Endothelial cell of umbilical vein (primary cell): ENCODE measurements at regions of chr14 and their contacts with region 1.

Region 1: GRCh38 chr14:34629657-34630529 is at the start of gene SNX6:
- DNase-seq: peak; percentile 77
- H3K4me3 ChIP-seq: peak within 1 kb of the TSS; percentile 80 to 100 (median 84)
- H3K27ac ChIP-seq: peak within 1 kb of the TSS; percentile 79
- H3K4me1 ChIP-seq: peaks cover 12% of the 10 kb centered on the region
- H3K27me3 ChIP-seq: no peaks in the 10 kb centered on the region
- CTCF ChIP-seq: no peak
- POLR2A ChIP-seq: peak; percentile 75
- total RNA-seq, gene SNX6: 91.6 and 95.1 TPM in 2 replicates

Region 2: GRCh38 chr14:34650421-34651216 is 20.7 kb after region 1 on chr14:
- CTCF ChIA-PET with region 1: no interaction called
- POLR2A ChIA-PET with region 1: no interaction called
- dilution Hi-C with region 1: no loop called
- intact Hi-C with region 1: loop called (anchors 1 kb)
- DNase-seq: peak; percentile 89
- H3K4me3 ChIP-seq: no peak overlapping the region
- H3K27ac ChIP-seq: peak overlapping the region; percentile 77
- H3K4me1 ChIP-seq: peaks cover 21% of the 10 kb centered on the region
- H3K27me3 ChIP-seq: no peaks in the 10 kb centered on the region
- CTCF ChIP-seq: no peak
- POLR2A ChIP-seq: peak; percentile 63

Region 3: DNA sequence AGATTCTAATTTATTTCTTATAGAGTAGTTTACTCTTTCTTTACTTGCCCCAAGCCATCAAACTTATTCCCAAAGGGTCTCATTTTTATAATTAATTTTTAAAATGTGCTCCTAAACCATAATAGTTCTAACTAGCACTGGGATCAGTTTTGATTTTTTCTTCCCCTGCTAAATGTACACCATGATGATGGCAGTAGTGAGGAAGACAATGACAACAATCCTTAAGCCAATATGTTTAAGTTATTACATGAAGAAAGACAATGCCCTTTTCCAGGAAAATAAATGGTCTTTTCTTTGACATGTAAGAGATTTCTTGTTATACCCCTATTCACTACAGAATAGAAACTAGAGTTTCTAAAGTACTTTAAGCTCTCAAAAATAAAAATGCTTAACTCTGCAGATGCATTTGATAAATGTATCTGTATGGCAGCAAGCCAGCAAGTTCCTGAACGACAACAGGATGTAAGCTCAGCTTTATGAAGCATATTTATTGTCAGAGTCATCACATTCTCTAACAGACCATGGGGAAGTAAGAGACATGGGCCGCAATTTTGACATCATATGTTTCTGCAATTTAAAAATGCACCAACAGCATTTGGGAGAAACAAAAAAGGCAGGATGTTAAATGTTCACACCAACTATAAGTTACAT is 36.0 kb after region 1 on chr14:
- CTCF ChIA-PET with region 1: no interaction called
- POLR2A ChIA-PET with region 1: no interaction called
- dilution Hi-C with region 1: no loop called
- intact Hi-C with region 1: loop called (anchors 5 kb)
- DNase-seq: peak; percentile 89
- H3K4me3 ChIP-seq: no peak overlapping the region
- H3K27ac ChIP-seq: peak overlapping the region; percentile 87
- H3K4me1 ChIP-seq: peaks cover 18% of the 10 kb centered on the region
- H3K27me3 ChIP-seq: no peaks in the 10 kb centered on the region
- CTCF ChIP-seq: no peak
- POLR2A ChIP-seq: no peak

Region 4: GRCh38 chr14:34781242-34781641 is 151.3 kb after region 1 on chr14:
- CTCF ChIA-PET with region 1: no interaction called
- POLR2A ChIA-PET with region 1: no interaction called
- dilution Hi-C with region 1: no loop called
- intact Hi-C with region 1: loop called (anchors 1 kb)
- DNase-seq: peak; percentile 95
- H3K4me3 ChIP-seq: peak overlapping the region in 1 of 3 experiments; percentile 40
- H3K27ac ChIP-seq: peak overlapping the region; percentile 95
- H3K4me1 ChIP-seq: peaks cover 22% of the 10 kb centered on the region
- H3K27me3 ChIP-seq: no peaks in the 10 kb centered on the region
- CTCF ChIP-seq: no peak
- POLR2A ChIP-seq: peak; percentile 34

Region 5: GRCh38 chr14:35121887-35122695 is 492.2 kb after region 1 on chr14 and contains the starts of genes PPP2R3C and PRORP:
- CTCF ChIA-PET with region 1: no interaction called
- POLR2A ChIA-PET with region 1: no interaction called
- dilution Hi-C with region 1: no loop called
- intact Hi-C with region 1: loop called (anchors 5 kb)
- DNase-seq: peak; percentile 95
- H3K4me3 ChIP-seq: peak within 1 kb of the TSS; percentile 81 to 96 (median 88)
- H3K27ac ChIP-seq: peak within 1 kb of the TSS; percentile 91
- H3K4me1 ChIP-seq: peaks cover 15% of the 10 kb centered on the region
- H3K27me3 ChIP-seq: no peaks in the 10 kb centered on the region
- CTCF ChIP-seq: no peak
- POLR2A ChIP-seq: no peak
- total RNA-seq, gene PPP2R3C: 40.6 and 46.0 TPM in 2 replicates
- total RNA-seq, gene PRORP: 36.3 and 36.9 TPM in 2 replicates